Endothelial cell of umbilical vein (primary cell): ENCODE measurements at regions of chr17 and their contacts with region 1.

Region 1: GRCh38 chr17:48816774-48817590 is at the start of gene TTLL6:
- DNase-seq: peak; percentile 85
- H3K4me3 ChIP-seq: peak within 1 kb of the TSS in 2 of 3 experiments; percentile 14 to 40
- H3K27ac ChIP-seq: no peak within 1 kb of the TSS
- H3K4me1 ChIP-seq: peaks cover 6% of the 10 kb centered on the region
- H3K27me3 ChIP-seq: peaks cover 11 to 21% of the 10 kb centered on the region in 2 experiments
- CTCF ChIP-seq: no peak
- POLR2A ChIP-seq: no peak
- total RNA-seq, gene TTLL6: not detected in 2 replicates

Region 2: GRCh38 chr17:48804925-48805411 is 12.0 kb before region 1 on chr17:
- CTCF ChIA-PET with region 1: interaction called, 54 read pairs
- POLR2A ChIA-PET with region 1: no interaction called
- dilution Hi-C with region 1: no loop called
- intact Hi-C with region 1: no loop called
- DNase-seq: peak; percentile 47
- H3K4me3 ChIP-seq: no peak overlapping the region
- H3K27ac ChIP-seq: no peak overlapping the region
- H3K4me1 ChIP-seq: no peaks in the 10 kb centered on the region
- H3K27me3 ChIP-seq: peaks cover 2 to 5% of the 10 kb centered on the region in 2 experiments
- CTCF ChIP-seq: peak; percentile 87 to 94
- POLR2A ChIP-seq: no peak

Region 3: DNA sequence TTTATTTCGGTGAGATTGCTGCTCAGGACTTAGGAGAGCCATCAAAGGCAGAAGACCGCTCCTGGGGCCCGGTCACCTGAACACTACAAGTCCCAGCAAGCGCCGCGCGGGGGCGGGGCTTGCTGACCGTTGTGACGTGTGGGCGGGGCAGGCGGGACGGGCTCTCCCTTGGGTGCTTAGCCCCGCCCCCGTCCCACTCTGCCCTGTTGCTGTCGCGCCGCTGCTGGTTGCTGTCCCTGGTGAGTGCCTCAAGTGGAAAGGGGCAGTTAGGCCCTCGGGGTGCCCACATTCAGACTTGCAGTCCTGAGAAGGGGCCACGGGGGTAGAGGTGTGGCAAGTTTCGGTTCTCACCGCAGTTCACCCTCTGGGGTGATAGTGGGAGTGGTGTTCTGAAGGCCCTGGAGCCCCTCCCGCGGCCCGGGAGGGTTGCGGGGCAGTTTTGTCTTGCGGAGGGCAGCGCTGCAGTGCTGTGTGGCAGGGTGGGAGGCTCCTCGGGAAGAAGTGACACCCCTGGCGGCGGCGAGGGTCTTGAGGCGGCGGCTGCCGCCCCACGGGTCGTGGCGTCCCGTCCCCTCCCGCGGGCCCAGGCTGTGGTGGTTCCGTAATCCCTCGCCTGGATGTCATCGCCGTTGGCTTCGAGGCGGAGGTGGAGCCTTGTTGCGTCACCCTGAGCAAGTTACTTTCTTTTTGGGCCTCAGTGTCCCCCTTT is 14.0 kb after region 1 on chr17 and contains the start of gene CALCOCO2:
- CTCF ChIA-PET with region 1: interaction called, 12 read pairs
- POLR2A ChIA-PET with region 1: no interaction called
- dilution Hi-C with region 1: no loop called
- intact Hi-C with region 1: no loop called
- DNase-seq: peak; percentile 93
- H3K4me3 ChIP-seq: peak within 1 kb of the TSS; percentile 66 to 98 (median 74)
- H3K27ac ChIP-seq: peak within 1 kb of the TSS; percentile 59
- H3K4me1 ChIP-seq: peaks cover 2% of the 10 kb centered on the region
- H3K27me3 ChIP-seq: no peaks in the 10 kb centered on the region
- CTCF ChIP-seq: no peak
- POLR2A ChIP-seq: peak; percentile 40
- total RNA-seq, gene CALCOCO2: 52.1 and 64.9 TPM in 2 replicates

Region 4: GRCh38 chr17:48850792-48851323 is 33.9 kb after region 1 on chr17:
- CTCF ChIA-PET with region 1: interaction called, 14 read pairs
- POLR2A ChIA-PET with region 1: no interaction called
- dilution Hi-C with region 1: no loop called
- intact Hi-C with region 1: no loop called
- DNase-seq: no peak
- H3K4me3 ChIP-seq: no peak overlapping the region
- H3K27ac ChIP-seq: no peak overlapping the region
- H3K4me1 ChIP-seq: no peaks in the 10 kb centered on the region
- H3K27me3 ChIP-seq: no peaks in the 10 kb centered on the region
- CTCF ChIP-seq: no peak
- POLR2A ChIP-seq: no peak

Region 5: DNA sequence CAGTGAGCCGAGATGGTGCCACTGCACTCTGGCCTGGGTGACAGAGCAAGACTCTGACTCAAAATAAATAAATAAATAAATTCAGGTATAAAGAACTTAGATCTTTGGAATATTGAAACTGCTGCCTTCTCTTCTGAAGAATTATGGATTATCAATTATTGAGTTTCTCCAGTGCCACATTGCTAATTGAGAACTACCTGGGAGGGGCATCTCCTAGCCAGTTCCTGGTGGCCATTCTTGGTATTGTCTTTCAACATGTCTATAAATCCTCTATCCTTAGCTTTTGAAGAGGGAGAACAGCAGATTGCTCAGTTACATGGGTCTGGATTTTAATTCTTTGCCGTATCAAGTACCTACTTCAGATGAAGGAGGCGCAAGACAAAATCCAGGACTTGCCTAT is 43.1 kb after region 1 on chr17:
- CTCF ChIA-PET with region 1: interaction called, 42 read pairs
- POLR2A ChIA-PET with region 1: no interaction called
- dilution Hi-C with region 1: no loop called
- intact Hi-C with region 1: no loop called
- DNase-seq: no peak
- H3K4me3 ChIP-seq: no peak overlapping the region
- H3K27ac ChIP-seq: no peak overlapping the region
- H3K4me1 ChIP-seq: no peaks in the 10 kb centered on the region
- H3K27me3 ChIP-seq: no peaks in the 10 kb centered on the region
- CTCF ChIP-seq: no peak
- POLR2A ChIP-seq: no peak